Esophagus muscularis mucosa (tissue), 4 donors: ENCODE measurements at regions of chr2 and their contacts with region 1.

Region 1: DNA sequence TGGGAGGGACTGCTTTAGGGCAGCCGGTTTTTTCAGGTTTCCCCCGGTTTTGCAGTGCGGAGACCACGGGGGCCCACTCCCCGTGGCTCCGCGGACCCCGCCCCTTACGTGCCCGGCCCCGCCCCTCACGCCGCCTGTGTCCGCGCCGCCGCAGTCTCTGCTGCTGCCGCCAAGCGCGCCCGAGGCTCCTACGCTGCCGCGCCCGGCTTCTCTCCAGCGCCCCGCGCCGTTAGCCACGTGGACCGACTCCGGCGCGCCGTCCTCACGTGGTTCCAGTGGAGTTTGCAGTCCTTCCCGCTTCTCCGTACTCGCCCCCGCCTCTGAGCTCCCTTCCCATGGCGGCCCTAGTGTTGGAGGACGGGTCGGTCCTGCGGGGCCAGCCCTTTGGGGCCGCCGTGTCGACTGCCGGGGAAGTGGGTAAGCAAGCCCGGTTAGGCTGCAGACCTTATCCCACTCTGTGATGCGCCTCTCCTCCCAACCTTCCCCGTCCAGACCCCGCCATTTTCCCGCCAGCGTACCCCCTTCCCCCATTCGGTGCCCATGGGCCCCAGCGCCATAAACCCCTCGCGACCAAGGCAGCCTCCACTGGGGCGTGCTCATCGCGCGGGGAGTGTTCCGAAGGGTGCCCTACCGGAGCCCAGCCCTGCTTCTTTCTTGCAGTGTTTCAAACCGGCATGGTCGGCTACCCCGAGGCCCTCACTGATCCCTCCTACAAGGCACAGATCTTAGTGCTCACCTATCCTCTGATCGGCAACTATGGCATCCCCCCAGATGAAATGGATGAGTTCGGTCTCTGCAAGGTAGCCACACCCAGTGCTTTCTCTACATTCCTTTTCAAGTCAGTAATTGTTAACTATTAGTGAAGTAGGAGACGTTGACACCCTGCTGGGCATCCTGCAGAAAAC is at the start of gene CAD:
- DNase-seq: peak; percentile 94
- H3K4me3 ChIP-seq: peak within 1 kb of the TSS; percentile 55 to 72 (median 72)
- H3K27ac ChIP-seq: peak within 1 kb of the TSS; percentile 70 to 77 (median 72)
- H3K4me1 ChIP-seq: peaks cover 25 to 42% (median 29%) of the 10 kb centered on the region in 4 donors
- H3K27me3 ChIP-seq: no peaks in the 10 kb centered on the region
- CTCF ChIP-seq: peak; percentile 19 to 40 (median 37)
- EP300 ChIP-seq: no peak
- POLR2A ChIP-seq: no peak
- total RNA-seq, gene CAD: 12.4 to 28.3 (median 16.6) TPM

Region 2: GRCh38 chr2:27133905-27134780 is 83.3 kb before region 1 on chr2 and contains the start of gene PREB:
- intact Hi-C with region 1: loop called (anchors 2 kb)
- DNase-seq: peak; percentile 98
- H3K4me3 ChIP-seq: peak within 1 kb of the TSS; percentile 80 to 93 (median 88)
- H3K27ac ChIP-seq: peak within 1 kb of the TSS; percentile 87 to 93 (median 90)
- H3K4me1 ChIP-seq: peaks cover 9 to 23% (median 18%) of the 10 kb centered on the region in 4 donors
- H3K27me3 ChIP-seq: no peaks in the 10 kb centered on the region
- CTCF ChIP-seq: peak in 1 of 3 experiments; percentile 15
- EP300 ChIP-seq: no peak
- POLR2A ChIP-seq: peak; percentile 90
- total RNA-seq, gene PREB: 39.9 to 64.7 (median 48.3) TPM